ENCODE measurements at regions of chr1 and their contacts with region 1.

Region 1: DNA sequence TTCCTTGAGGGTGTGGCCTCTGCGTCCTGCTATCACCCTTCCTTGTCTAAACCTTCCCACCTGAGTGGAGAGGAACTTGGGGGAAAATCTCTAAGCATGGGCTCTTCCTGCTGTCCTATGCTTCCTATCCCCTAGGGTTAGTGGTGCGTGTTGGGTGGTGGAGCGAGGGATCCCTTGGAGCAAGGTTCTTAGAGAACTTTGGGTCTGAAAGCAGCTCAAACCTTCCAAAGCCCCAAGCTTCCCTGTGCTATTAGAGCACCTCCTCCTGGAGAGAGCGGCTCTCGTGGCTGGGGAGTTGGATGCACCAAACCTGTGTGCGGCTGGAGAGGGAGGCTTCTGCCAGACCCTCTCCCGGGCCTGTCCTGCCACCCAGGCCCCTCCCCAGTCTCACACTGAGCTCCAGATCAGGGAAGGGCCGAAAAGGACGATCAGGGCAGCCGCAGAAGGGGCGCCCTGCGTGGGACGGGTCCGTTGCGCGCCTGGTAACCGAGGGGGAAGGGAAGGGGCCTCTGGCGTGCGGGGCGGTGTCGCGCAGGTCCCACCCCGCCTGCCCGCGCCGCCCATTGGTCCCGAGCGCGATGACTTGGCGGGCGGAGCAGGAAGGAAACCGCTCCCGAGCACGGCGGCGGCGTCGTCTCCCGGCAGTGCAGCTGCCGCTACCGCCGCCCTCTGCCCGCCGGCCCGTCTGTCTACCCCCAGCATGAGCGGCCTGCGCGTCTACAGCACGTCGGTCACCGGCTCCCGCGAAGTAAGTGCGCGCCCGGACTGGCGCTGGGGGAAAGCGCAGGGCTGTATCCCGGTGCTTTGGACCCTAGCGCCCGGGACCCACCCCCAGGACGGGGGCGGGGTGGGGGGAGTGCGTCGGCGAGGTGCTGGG is at the start of gene SH3BGRL3:
- DNase-seq: peak; percentile 96
- ATAC-seq: peak; percentile 77
- total RNA-seq, gene SH3BGRL3: 50.5 TPM

Region 2: DNA sequence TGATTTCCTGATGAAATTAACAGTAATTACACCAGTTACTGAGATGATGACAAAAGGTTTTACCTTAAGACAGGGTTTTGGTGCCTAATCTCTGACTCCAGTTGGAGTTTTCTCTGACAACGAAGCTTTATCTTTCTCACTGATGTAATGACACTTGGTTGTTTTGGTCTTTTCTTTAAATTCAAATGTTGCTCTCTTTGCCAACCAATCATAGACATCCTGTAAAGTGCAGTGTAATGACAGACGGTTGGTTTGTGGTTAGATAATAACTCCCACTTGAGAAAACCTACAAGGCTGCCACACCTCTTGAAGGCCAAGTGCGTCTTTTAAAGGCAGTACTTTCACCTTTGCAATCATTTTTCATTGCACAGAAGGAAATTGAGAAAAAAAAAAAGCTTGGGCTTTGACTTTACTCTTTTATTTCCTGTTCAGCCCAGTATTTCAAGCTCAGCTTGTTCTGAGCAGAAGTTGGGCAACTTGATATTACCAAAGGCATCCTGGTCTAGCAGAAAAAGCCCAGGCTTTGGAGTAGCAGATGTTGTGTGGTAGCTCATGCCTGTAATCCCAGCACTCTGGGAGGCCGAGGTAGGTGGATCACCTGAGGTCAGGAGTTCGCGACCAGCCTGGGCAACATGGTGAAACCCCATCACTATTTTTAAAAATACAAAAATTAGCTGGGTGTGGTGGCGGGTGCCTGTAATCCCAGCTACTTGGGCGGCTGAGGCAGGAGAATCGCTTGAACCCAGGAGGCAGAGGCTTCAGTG is 153.2 kb before region 1 on chr1:
- intact Hi-C with region 1: no loop called
- DNase-seq: no peak
- ATAC-seq: peak; percentile 50

Region 3: DNA sequence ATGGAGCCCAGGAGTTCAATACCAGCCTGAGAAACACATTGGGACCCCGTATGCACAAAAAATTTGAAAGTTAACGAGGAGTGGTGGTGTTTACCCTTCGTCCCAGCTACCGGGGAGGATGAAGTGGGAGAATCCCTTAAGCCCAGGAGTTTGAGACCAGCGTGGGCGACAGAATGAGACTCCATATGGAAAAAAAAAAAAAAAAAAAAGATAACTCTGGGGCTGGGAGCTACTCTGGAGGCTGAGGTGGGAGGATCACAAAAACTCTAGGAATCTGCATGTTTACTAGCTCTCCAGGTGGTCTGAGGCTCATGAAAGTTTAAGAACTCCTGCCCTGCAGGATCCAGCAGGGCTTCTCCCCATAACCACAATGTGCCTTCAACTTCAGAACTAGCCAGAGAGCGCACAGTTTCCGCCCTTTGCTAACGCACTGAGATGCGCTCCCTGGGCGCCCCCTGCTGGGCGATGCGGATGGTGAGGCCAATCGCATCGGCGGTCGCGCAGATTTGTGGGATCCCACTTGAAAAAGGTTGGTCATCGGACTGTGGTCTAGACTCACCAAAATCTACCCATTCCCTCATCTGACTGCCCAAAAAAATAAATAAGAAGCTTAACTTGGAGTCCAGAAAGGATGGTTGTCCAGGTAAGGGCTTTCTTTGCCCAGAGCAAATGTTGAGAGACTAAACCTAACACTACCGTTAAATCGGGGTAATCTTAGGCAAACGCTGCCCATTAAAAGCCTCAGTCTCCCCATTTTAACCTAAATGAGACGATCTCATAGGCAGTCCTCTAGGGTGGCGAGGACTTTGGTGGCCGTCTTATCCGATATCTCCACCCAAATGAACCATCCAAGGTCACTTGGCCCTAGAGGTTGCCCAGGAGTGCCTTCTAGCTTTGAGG is 84.1 kb after region 1 on chr1:
- intact Hi-C with region 1: loop called (anchors 5 kb)
- DNase-seq: peak; percentile 92
- ATAC-seq: peak; percentile 68

Measured in Right ventricle myocardium inferior (tissue), 1 donor.